B cell (primary cell): ENCODE measurements at regions of chr2 and their contacts with region 1.

Region 1: GRCh38 chr2:191231995-191232394 is 13.2 kb upstream of the MYO1B start:
- DNase-seq: no peak
- ATAC-seq: no peak
- H3K4me3 ChIP-seq: no peak overlapping the region
- H3K4me3 Mint-ChIP-seq: no peak overlapping the region
- H3K27ac ChIP-seq: no peak overlapping the region
- H3K27ac Mint-ChIP-seq: no peak overlapping the region
- H3K4me1 ChIP-seq: no peaks in the 10 kb centered on the region
- H3K4me1 Mint-ChIP-seq: peaks cover 4% of the 10 kb centered on the region
- H3K27me3 ChIP-seq: no peaks in the 10 kb centered on the region
- H3K27me3 Mint-ChIP-seq: no peaks in the 10 kb centered on the region
- CTCF ChIP-seq: no peak

Region 2: DNA sequence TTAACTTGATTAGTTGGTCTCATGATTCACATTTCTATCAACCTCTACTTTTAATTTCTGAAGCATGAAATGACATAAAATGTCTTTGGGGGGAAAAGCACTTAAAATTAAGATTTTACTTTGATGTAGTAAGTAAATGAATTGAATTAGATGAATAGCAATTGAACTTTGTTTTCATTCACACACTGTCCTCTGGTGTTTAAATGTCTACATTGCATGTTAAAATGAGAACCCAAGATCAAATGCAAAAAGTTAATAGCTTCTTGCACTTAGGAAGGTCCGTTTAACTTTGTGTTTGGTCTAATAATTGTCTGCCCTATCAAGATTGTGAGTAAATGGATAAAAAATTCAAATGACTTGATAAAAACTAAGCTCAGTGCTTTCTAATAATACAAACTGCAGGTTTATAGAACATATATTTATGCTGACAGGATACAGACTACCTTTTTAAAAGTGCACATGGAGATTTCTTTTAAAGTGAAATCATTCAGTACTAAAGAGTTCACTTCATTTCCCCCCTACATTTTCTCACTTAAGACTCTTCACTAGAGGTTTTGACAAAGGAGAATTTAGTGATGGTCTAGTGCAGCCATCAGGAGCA is 289.7 kb after region 1 on chr2:
- CTCF ChIA-PET with region 1: interaction called, 5 read pairs
- POLR2A ChIA-PET with region 1: no interaction called
- intact Hi-C with region 1: loop called (anchors 5 kb)
- DNase-seq: peak; percentile 37
- ATAC-seq: peak; percentile 33
- H3K4me3 ChIP-seq: no peak overlapping the region
- H3K4me3 Mint-ChIP-seq: no peak overlapping the region
- H3K27ac ChIP-seq: no peak overlapping the region
- H3K27ac Mint-ChIP-seq: no peak overlapping the region
- H3K4me1 ChIP-seq: no peaks in the 10 kb centered on the region
- H3K4me1 Mint-ChIP-seq: no peaks in the 10 kb centered on the region
- H3K27me3 ChIP-seq: peaks cover 0 to 4% (median 0%) of the 10 kb centered on the region in 4 experiments
- H3K27me3 Mint-ChIP-seq: peaks cover 4% of the 10 kb centered on the region
- CTCF ChIP-seq: peak; percentile 92